Activated CD4-positive, alpha-beta T cell treated with anti-CD3 and anti-CD28 coated beads for 36 hours (primary cell): ENCODE measurements at regions of chr2 and their contacts with region 1.

Region 1: GRCh38 chr2:39059366-39059952 is 61.4 kb downstream of the SOS1 start:
- DNase-seq: no peak
- ATAC-seq: peak; percentile 36
- H3K4me3 Mint-ChIP-seq: no peak overlapping the region
- H3K27ac Mint-ChIP-seq: no peak overlapping the region
- H3K4me1 Mint-ChIP-seq: no peaks in the 10 kb centered on the region
- H3K27me3 Mint-ChIP-seq: no peaks in the 10 kb centered on the region

Region 2: GRCh38 chr2:39234754-39235153 is 175.3 kb after region 1 on chr2:
- CTCF ChIA-PET with region 1: interaction called, 322 read pairs
- POLR2A ChIA-PET with region 1: interaction called, 3 read pairs
- intact Hi-C with region 1: no loop called
- DNase-seq: no peak
- ATAC-seq: no peak
- H3K4me3 Mint-ChIP-seq: no peak overlapping the region
- H3K27ac Mint-ChIP-seq: no peak overlapping the region
- H3K4me1 Mint-ChIP-seq: no peaks in the 10 kb centered on the region
- H3K27me3 Mint-ChIP-seq: no peaks in the 10 kb centered on the region

Region 3: DNA sequence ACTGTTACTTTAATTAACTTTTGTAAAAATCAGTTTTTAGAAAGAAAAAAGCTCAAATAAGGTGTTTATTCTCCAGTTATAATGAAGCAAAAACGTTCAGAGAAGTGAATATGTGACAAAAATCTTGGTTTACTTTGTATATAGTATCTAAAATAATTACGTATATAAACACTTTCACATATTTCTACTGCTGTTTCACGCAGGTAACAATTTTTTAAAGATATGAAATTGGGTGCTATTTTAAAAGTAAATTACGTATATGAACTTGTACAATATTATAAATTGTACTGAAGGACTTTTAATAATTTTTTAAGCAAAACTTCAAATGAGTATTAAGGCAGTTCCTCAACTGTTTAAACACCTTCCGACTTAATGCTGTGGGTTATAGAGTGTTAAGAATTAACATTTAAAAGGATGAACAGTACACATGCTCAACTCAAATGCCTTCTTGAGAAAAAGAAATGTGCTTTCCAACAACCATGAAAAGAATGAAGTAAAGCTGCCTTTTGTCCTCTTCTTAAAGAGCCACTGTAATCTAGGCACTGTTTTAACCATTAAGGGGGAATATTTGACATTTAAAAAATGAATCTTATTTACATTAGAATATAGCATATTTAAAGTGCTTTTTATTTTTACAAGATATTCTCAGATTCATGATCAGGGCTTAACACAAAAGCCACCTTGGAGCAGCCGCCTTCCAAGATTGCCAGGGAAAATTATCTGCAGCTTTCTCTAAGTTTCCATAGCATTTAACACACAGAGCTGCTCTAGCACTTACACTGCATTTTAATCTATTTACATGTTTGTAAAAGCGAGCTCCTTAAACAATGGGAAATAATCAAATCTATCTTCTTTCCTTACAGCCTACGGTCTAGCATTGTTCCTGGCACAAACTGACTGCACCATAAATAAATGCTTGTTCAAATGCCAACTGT is 240.9 kb after region 1 on chr2:
- CTCF ChIA-PET with region 1: no interaction called
- POLR2A ChIA-PET with region 1: no interaction called
- intact Hi-C with region 1: no loop called
- DNase-seq: no peak
- ATAC-seq: no peak
- H3K4me3 Mint-ChIP-seq: no peak overlapping the region
- H3K27ac Mint-ChIP-seq: no peak overlapping the region
- H3K4me1 Mint-ChIP-seq: no peaks in the 10 kb centered on the region
- H3K27me3 Mint-ChIP-seq: no peaks in the 10 kb centered on the region

Region 4: DNA sequence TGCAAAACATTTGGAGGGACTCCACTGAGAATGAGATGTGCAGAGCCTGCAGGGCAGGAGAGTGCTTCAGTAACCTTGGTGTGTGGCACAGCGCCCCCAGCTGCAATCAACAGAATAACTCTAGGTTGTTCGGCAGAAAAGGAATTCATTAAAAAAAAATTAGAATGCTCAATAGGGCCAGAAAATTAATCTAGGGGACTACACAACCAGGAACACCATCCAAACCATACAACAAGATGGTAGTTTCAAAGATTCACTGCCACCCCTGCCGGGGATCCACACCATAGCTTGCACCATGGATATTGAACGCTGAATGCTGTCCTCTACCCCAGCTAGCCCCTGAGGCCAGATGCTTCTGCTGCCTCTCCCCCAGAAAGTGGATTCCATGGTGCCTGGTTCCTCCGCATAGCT is 669.5 kb after region 1 on chr2:
- CTCF ChIA-PET with region 1: interaction called, 3 read pairs
- POLR2A ChIA-PET with region 1: no interaction called
- intact Hi-C with region 1: loop called in 1 of 2 experiments (anchors 10 kb)
- DNase-seq: peak; percentile 71
- ATAC-seq: peak; percentile 63
- H3K4me3 Mint-ChIP-seq: no peak overlapping the region
- H3K27ac Mint-ChIP-seq: no peak overlapping the region
- H3K4me1 Mint-ChIP-seq: peaks cover 11% of the 10 kb centered on the region
- H3K27me3 Mint-ChIP-seq: peaks cover 11% of the 10 kb centered on the region